GM12878 (cell line): ENCODE measurements at regions of chr3 and their contacts with region 1.

Region 1: DNA sequence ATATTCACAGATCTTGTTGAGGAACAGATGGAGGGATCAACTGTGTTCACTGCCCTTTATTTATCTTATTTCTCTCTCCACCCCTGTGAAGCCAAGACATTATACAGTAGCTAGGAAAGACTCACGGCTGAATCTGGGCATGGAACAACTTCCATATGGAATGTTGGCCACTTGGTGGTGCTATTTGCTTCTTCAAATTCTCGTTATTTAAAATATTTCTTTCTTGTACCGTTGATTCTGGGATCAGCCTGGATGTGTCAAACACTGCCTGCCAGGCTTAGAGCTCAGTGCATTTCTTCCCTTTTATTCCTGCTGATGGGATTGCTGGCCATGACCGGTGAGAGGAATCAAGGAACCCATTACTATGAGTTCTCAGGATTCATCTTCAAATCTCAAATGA is 17.5 kb upstream of the GASK1A start:
- DNase-seq: no peak
- ATAC-seq: peak; percentile 54
- H3K4me3 ChIP-seq: no peak overlapping the region
- H3K27ac ChIP-seq: no peak overlapping the region
- H3K4me1 ChIP-seq: no peaks in the 10 kb centered on the region
- H3K27me3 ChIP-seq: no peaks in the 10 kb centered on the region
- CTCF ChIP-seq: peak; percentile 42 to 54 (median 45); a peak in 4 of 6 replicates
- EP300 ChIP-seq: no peak
- POLR2A ChIP-seq: no peak
- RAD21 ChIP-seq: peak; percentile 49; the same call in 1 of the 2 replicates

Region 2: DNA sequence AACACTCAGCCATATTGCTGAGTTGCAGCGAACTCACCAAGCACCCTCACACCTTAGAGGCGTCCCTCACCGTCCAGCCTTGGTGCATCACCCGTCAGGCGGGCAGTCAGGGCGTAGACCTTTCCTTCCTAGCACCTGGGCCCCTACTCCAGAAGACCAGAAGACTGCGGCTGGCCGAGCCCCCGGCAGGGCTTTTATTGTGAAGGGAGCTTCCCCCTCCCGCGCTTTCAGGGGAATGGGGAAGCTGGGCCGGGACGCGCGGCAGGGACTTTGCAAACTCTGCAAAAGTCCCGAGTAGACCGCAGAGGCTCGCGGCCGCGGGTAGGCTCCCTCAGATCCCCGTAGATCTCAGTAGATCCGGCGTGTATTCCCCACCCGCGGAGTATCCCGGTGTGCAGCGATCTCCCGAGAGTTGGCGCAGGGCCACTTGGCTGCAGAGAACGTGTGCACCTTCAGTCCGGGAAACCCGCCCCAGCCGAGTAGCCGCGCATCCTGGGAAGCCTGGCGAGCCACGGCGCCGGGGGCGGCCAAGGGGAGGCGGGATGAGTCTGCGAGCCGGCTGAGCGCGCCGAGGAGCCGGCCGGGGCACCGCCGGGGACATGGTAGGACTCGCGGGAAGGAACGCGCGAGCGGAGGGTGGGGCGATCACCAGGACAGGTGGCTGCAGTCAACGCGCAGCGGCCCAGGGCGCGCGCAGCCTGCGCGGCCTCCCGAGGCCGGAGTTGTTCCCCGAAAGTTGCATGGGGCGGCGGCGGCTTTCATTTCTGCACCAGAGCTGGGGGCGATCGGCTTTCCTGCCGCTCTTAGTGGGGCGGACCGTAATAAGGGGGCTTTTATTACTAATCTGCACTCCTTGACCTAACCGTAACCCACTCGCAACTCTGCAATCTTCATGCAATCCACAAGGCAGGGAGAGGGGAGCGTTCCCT is 17.7 kb after region 1 on chr3 and contains the start of gene GASK1A:
- CTCF ChIA-PET with region 1: interaction called, 12 read pairs
- POLR2A ChIA-PET with region 1: no interaction called
- RAD21 ChIA-PET with region 1: no interaction called
- SMC1A ChIA-PET with region 1: interaction called, 13 read pairs
- in situ Hi-C with region 1: no loop called
- intact Hi-C with region 1: no loop called
- DNase-seq: no peak
- ATAC-seq: peak; percentile 74
- H3K4me3 ChIP-seq: no peak within 1 kb of the TSS
- H3K27ac ChIP-seq: no peak within 1 kb of the TSS
- H3K4me1 ChIP-seq: no peaks in the 10 kb centered on the region
- H3K27me3 ChIP-seq: peaks cover 5 to 10% of the 10 kb centered on the region in 2 experiments; a peak in 3 of 4 replicates
- CTCF ChIP-seq: no peak
- EP300 ChIP-seq: no peak
- POLR2A ChIP-seq: no peak
- RAD21 ChIP-seq: no peak
- polyA plus RNA-seq, gene GASK1A: not detected

Region 3: GRCh38 chr3:43076857-43077256 is 115.2 kb after region 1 on chr3:
- CTCF ChIA-PET with region 1: interaction called, 87 read pairs
- POLR2A ChIA-PET with region 1: no interaction called
- RAD21 ChIA-PET with region 1: interaction called, 50 read pairs
- SMC1A ChIA-PET with region 1: interaction called, 42 read pairs
- in situ Hi-C with region 1: no loop called
- intact Hi-C with region 1: no loop called
- DNase-seq: no peak
- ATAC-seq: no peak
- H3K4me3 ChIP-seq: no peak overlapping the region
- H3K27ac ChIP-seq: no peak overlapping the region
- H3K4me1 ChIP-seq: no peaks in the 10 kb centered on the region
- H3K27me3 ChIP-seq: no peaks in the 10 kb centered on the region; a peak in 1 of 4 replicates
- CTCF ChIP-seq: no peak
- EP300 ChIP-seq: no peak
- POLR2A ChIP-seq: no peak
- RAD21 ChIP-seq: no peak

Region 4: DNA sequence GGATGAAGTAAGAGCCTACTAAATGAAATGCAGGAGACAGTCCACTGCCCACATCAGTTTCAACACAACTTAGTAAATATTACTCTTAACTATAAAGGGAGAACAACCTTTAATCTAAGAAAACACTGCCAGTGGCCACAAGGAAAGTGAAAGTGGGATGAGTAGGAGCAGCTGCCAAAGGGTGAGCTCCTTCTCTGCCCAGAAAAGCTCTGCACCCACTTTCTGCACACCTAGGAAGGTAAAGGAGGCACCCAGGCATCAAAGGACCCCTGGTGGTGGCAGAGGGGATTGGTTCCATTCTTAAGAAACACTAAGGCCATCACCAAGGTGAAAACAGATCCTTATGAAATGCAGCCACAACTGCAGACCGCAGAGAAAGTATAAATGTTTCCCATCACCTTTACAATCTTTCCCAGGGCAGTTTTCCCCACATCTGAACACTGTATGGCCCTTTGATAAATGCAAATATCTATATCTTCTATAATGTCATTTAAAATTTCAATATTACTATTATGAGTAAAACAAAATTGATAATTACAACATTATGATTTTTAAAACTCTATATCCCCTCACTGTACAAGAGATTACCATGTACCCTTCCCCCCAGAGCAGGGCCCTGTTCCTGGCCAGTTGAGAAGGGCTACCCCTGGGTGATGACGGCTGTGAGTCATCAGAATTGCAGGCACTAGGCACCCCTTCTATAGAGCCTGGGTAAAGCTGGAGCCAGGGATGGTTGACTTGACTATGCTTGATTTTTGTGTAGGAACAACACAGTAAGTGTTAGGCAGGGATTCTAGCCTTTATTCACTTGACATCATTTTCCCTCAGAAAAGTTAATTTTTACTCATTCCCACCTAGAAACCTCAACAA is 416.7 kb after region 1 on chr3:
- CTCF ChIA-PET with region 1: interaction called, 12 read pairs
- POLR2A ChIA-PET with region 1: no interaction called
- RAD21 ChIA-PET with region 1: no interaction called
- SMC1A ChIA-PET with region 1: interaction called, 6 read pairs
- in situ Hi-C with region 1: loop called (anchors 10 kb)
- intact Hi-C with region 1: loop called (anchors 2 kb)
- DNase-seq: peak; percentile 4
- ATAC-seq: peak; percentile 97
- H3K4me3 ChIP-seq: no peak overlapping the region
- H3K27ac ChIP-seq: no peak overlapping the region
- H3K4me1 ChIP-seq: no peaks in the 10 kb centered on the region
- H3K27me3 ChIP-seq: no peaks in the 10 kb centered on the region
- CTCF ChIP-seq: peak; percentile 81 to 85 (median 81)
- EP300 ChIP-seq: no peak
- POLR2A ChIP-seq: no peak
- RAD21 ChIP-seq: peak; percentile 86